ENCODE measurements at regions of chr6 and their contacts with region 1.

Region 1: DNA sequence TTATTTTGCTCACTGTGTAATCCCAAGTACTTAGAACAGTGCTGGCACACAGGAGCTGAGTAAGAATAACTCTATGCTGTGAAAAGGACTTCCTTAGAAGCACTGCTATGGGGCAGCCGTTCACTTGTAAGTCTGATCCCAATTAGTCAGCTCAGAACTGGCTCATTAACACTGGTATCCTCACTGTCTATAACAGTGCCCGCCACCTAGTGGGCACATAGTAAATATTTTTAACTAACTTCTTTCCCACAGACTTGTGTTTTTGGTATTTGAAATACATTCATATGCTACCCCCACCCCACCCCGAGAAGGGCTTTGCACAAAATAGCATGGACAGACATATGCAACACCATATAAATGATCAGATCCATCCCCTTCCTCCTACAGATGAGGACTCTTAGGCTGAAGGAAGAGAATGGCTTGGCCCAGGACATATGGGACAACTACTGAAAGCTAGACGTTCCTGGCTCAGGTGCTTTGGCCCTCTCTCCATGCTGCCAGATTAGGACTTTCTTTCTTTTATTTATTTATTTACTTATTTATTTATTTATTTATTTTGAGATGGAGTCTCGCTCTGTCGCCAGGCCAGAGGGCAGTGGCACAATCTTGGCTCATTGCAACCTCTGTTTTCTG is 47.1 kb downstream of the DST start:
- H3K4me3 ChIP-seq: no peak overlapping the region
- H3K27ac ChIP-seq: no peak overlapping the region
- H3K4me1 ChIP-seq: no peaks in the 10 kb centered on the region
- CTCF ChIP-seq: 0 out of 2 replicates have a peak, but pooled peaks have one; percentile 18

Region 2: GRCh38 chr6:56314683-56315523 is 280.7 kb before region 1 on chr6:
- CTCF ChIA-PET with region 1: interaction called, 81 read pairs
- POLR2A ChIA-PET with region 1: no interaction called
- H3K4me3 ChIP-seq: no peak overlapping the region
- H3K27ac ChIP-seq: no peak overlapping the region
- H3K4me1 ChIP-seq: peaks cover 7% of the 10 kb centered on the region
- CTCF ChIP-seq: peak; percentile 40; the same call in 1 of the 2 replicates

Region 3: GRCh38 chr6:56364827-56365313 is 230.7 kb before region 1 on chr6:
- CTCF ChIA-PET with region 1: interaction called, 47 read pairs
- POLR2A ChIA-PET with region 1: no interaction called
- H3K4me3 ChIP-seq: no peak overlapping the region
- H3K27ac ChIP-seq: no peak overlapping the region
- H3K4me1 ChIP-seq: peaks cover 19% of the 10 kb centered on the region
- CTCF ChIP-seq: no peak

Region 4: DNA sequence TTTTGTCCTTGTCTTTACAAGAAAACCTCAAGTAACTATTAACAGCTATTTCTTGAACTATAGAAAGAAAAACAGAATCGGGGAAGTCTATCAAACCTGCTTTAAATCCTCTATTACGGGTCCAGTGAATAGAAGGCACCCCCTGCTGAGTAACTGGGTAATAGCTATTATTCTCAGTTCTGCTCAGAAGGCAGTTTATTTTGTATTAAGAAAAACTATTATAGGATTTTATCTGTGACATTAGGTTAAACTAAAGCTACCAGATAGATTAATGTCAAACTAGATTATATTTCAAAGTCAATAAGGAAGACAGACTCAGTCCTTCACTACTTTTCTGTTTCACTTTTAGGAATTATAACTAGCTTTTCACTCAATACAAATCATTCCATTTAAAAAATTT is 46.6 kb before region 1 on chr6:
- CTCF ChIA-PET with region 1: interaction called, 39 read pairs
- POLR2A ChIA-PET with region 1: no interaction called
- H3K4me3 ChIP-seq: no peak overlapping the region
- H3K27ac ChIP-seq: no peak overlapping the region
- H3K4me1 ChIP-seq: peaks cover 42% of the 10 kb centered on the region
- CTCF ChIP-seq: no peak

Region 5: GRCh38 chr6:56575736-56576135 is 19.9 kb before region 1 on chr6:
- CTCF ChIA-PET with region 1: interaction called, 23 read pairs
- POLR2A ChIA-PET with region 1: no interaction called
- H3K4me3 ChIP-seq: no peak overlapping the region
- H3K27ac ChIP-seq: no peak overlapping the region
- H3K4me1 ChIP-seq: peaks cover 3% of the 10 kb centered on the region; the same call in 1 of the 2 replicates
- CTCF ChIP-seq: no peak

Region 6: DNA sequence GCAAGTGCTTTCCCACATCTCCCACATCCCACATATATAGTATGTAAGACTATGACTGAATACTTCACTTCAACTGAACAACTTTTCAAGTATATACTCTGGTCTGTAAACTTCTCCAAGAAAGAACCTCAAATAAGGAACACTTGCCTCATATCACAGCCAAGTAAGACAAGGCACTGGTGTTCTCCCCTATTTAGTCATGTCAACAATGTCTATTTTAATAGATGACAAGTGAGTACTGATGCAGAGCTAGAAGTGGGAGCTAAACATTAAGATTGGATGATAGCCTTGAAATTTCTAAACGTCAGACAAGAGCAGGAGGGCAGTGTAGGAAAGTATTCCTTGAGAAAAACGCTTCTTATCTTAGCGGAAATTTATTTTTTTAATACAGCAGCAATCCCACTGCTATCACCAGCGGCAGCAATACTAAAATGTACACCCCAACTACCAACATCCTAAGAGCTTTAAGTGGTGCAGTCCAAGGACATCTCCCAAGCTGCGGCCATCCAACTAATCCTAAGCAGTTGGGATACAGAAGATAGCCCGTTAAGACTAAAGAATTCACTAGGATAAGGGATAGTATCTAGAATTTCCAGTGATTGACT is 17.7 kb after region 1 on chr6:
- CTCF ChIA-PET with region 1: interaction called, 33 read pairs
- POLR2A ChIA-PET with region 1: no interaction called
- H3K4me3 ChIP-seq: no peak overlapping the region
- H3K27ac ChIP-seq: no peak overlapping the region
- H3K4me1 ChIP-seq: no peaks in the 10 kb centered on the region
- CTCF ChIP-seq: no peak